ENCODE measurements at regions of chr3 and their contacts with region 1.

Region 1: DNA sequence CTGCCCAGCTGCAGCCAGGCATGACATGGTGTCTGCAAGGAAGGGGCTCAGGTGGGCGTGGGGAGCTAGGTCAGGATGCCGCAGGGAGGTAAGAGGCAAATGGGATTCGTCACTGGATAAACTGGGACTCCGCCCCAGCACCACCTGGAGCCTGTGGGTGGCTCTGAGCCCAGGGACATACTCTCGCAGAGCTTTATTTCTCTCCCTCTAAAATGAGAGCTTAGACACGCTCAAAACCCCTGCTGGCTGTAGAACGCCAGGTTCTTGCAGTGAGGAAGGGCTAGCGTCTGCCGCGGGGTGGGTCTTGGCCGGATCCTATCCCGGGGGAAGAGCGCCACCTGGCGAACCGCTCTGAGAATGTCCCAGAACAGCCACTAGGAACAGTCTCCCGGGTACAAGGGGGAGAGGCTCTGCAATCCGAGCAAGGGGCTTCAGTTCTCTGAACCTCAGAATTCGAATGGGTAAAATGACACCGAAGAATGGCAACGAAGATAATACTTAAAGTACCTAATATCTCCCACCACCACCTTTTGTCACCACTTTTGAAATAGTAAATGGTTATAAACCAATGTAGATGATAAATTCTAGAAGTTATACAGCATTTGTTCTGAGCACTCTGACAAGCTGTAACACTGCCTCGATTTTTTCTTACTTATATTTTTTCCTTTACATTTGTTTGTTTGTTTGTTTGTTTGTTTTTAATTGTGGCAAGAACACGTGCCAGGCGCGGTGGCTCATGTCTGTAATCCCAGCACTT is 53.2 kb upstream of the SRGAP3 start:
- DNase-seq: peak; percentile 55 to 61
- ATAC-seq: peak; percentile 69 to 97
- H3K4me3 ChIP-seq: peak overlapping the region in 2 of 4 donors; percentile 21 to 33
- H3K27ac ChIP-seq: no peak overlapping the region
- H3K4me1 ChIP-seq: peaks cover 0 to 2% of the 10 kb centered on the region in 2 donors
- H3K27me3 ChIP-seq: no peaks in the 10 kb centered on the region
- CTCF ChIP-seq: peak; percentile 89 to 94 (median 90)
- POLR2A ChIP-seq: no peak

Region 2: DNA sequence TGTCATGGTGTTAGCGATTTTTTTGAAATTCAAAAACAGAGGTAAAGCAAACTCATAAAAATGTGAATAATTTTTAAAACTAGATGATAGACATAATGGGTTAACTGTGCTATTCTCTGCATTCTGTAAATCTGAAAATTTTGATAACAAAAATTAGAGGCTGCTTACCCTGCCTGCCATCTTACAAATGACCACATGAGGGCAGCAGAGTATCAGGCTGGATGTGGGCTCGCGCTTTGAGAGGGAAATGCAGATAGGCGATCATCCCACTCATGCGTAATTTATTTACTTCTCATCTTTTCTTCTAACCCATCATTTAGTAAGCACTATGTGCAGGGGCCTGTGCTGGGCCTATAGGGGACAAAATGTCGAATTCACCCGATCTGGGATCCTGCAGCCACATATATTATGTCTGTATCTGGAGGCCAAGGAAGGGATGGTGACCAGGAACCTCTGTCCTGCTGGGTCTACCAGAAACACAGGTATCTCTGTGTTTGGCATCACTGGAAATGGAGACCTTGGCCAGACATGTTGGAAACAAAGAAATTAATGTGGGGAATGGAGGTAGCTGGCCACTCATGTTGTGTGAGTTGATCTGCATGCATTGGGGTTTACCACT is 331.5 kb before region 1 on chr3:
- in situ Hi-C with region 1: loop called in 3 of 4 experiments (anchors 5 kb)
- intact Hi-C with region 1: loop called (anchors 1 kb)
- DNase-seq: peak in 1 of 2 donors; percentile 36
- ATAC-seq: peak; percentile 57 to 69
- H3K4me3 ChIP-seq: no peak overlapping the region
- H3K27ac ChIP-seq: no peak overlapping the region
- H3K4me1 ChIP-seq: no peaks in the 10 kb centered on the region
- H3K27me3 ChIP-seq: no peaks in the 10 kb centered on the region
- CTCF ChIP-seq: peak; percentile 88 to 99 (median 95)
- POLR2A ChIP-seq: no peak

Region 3: DNA sequence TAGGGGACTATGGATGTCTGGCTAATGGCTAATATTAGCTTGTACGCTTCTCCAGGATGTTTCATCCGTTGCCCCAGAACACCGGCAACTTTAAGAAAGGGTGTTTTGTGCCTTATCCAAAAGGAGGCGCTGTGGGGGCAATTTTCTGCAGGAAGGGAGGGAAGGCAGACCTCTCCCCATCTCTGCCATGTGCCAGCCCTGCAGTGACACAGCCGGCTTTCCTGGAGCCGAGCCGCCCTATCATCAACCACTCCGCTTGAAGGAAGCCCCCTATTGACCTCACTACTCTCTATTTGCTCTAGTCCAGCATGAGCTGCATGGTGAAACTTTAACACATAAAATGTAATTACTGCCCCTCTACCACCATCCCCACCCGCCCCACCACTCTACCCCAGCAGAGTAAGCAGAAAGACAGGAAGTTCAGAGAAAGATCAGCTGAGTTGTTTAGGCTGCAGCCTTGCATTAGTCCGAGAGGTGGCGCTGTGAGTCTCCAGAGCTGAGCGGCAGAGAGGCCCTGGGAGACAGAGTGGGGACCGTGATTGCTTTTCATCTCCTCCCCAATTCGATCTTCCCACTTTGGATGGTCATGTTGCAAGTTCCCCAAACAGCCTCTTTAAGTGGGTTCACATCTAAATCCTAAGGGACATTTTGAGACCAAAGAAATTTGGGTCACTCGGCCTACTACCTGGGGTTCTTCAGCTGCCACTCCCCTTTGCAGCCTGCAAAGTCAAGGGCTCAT is 314.8 kb before region 1 on chr3:
- in situ Hi-C with region 1: loop called in 1 of 4 experiments (anchors 5 kb)
- intact Hi-C with region 1: loop called (anchors 1 kb)
- DNase-seq: peak in 1 of 2 donors; percentile 51
- ATAC-seq: peak; percentile 55 to 76
- H3K4me3 ChIP-seq: no peak overlapping the region
- H3K27ac ChIP-seq: no peak overlapping the region
- H3K4me1 ChIP-seq: no peaks in the 10 kb centered on the region
- H3K27me3 ChIP-seq: no peaks in the 10 kb centered on the region
- CTCF ChIP-seq: peak; percentile 60 to 83 (median 74)
- POLR2A ChIP-seq: no peak

Region 4: GRCh38 chr3:9067352-9067975 is 235.1 kb before region 1 on chr3:
- in situ Hi-C with region 1: no loop called
- intact Hi-C with region 1: loop called (anchors 5 kb)
- DNase-seq: peak in 1 of 2 donors; percentile 36
- ATAC-seq: peak; percentile 66 to 74
- H3K4me3 ChIP-seq: no peak overlapping the region
- H3K27ac ChIP-seq: no peak overlapping the region
- H3K4me1 ChIP-seq: no peaks in the 10 kb centered on the region
- H3K27me3 ChIP-seq: no peaks in the 10 kb centered on the region
- CTCF ChIP-seq: peak; percentile 77 to 94 (median 84)
- POLR2A ChIP-seq: no peak

Region 5: GRCh38 chr3:9108876-9109567 is 193.6 kb before region 1 on chr3:
- in situ Hi-C with region 1: no loop called
- intact Hi-C with region 1: loop called (anchors 5 kb)
- DNase-seq: no peak
- ATAC-seq: no peak
- H3K4me3 ChIP-seq: no peak overlapping the region
- H3K27ac ChIP-seq: no peak overlapping the region
- H3K4me1 ChIP-seq: peaks cover 4 to 7% of the 10 kb centered on the region in 2 donors
- H3K27me3 ChIP-seq: no peaks in the 10 kb centered on the region
- CTCF ChIP-seq: no peak
- POLR2A ChIP-seq: no peak